Endothelial cell of umbilical vein (primary cell): ENCODE measurements at regions of chr7 and their contacts with region 1.

Region 1: GRCh38 chr7:105808703-105809590 is 67.5 kb downstream of the ATXN7L1 start:
- DNase-seq: peak; percentile 62
- H3K4me3 ChIP-seq: no peak overlapping the region
- H3K27ac ChIP-seq: no peak overlapping the region
- H3K4me1 ChIP-seq: peaks cover 26% of the 10 kb centered on the region
- H3K27me3 ChIP-seq: no peaks in the 10 kb centered on the region
- CTCF ChIP-seq: no peak
- POLR2A ChIP-seq: no peak

Region 2: DNA sequence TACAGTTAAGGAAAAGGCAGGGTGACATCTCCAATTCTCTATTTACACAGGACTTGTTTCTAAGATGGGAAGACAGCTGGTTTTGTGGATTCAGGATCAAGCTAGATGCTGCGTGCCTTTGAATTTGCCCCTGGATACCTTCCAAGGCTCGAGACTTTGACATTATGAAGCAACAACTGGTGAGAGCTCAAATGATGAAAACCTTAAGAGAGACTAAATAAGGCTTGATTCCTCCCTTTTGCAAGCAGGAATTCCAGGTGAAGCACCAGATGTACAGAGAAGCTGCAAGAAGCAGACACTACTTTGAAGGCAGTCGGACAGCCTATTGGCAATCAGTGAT is 13.6 kb before region 1 on chr7:
- CTCF ChIA-PET with region 1: interaction called, 13 read pairs
- POLR2A ChIA-PET with region 1: no interaction called
- dilution Hi-C with region 1: no loop called
- intact Hi-C with region 1: no loop called
- DNase-seq: no peak
- H3K4me3 ChIP-seq: no peak overlapping the region
- H3K27ac ChIP-seq: no peak overlapping the region
- H3K4me1 ChIP-seq: peaks cover 8% of the 10 kb centered on the region
- H3K27me3 ChIP-seq: no peaks in the 10 kb centered on the region
- CTCF ChIP-seq: no peak
- POLR2A ChIP-seq: no peak

Region 3: GRCh38 chr7:105830391-105831301 is 21.7 kb after region 1 on chr7:
- CTCF ChIA-PET with region 1: interaction called, 8 read pairs
- POLR2A ChIA-PET with region 1: no interaction called
- dilution Hi-C with region 1: no loop called
- intact Hi-C with region 1: loop called (anchors 1 kb)
- DNase-seq: peak; percentile 88
- H3K4me3 ChIP-seq: no peak overlapping the region
- H3K27ac ChIP-seq: peak overlapping the region; percentile 88
- H3K4me1 ChIP-seq: peaks cover 30% of the 10 kb centered on the region
- H3K27me3 ChIP-seq: no peaks in the 10 kb centered on the region
- CTCF ChIP-seq: no peak
- POLR2A ChIP-seq: no peak